A673 (cell line): ENCODE measurements at regions of chr10 and their contacts with region 1.

Region 1: GRCh38 chr10:119315128-119316001 is 108.0 kb downstream of the GRK5 start:
- DNase-seq: peak; percentile 80
- H3K4me3 ChIP-seq: no peak overlapping the region
- H3K27ac ChIP-seq: peak overlapping the region; percentile 85
- H3K4me1 ChIP-seq: peaks cover 55% of the 10 kb centered on the region
- H3K27me3 ChIP-seq: no peaks in the 10 kb centered on the region
- CTCF ChIP-seq: no peak

Region 2: GRCh38 chr10:119333146-119333792 is 17.9 kb after region 1 on chr10:
- CTCF ChIA-PET with region 1: no interaction called
- POLR2A ChIA-PET with region 1: interaction called, 21 read pairs
- intact Hi-C with region 1: no loop called
- DNase-seq: peak; percentile 40
- H3K4me3 ChIP-seq: no peak overlapping the region
- H3K27ac ChIP-seq: peak overlapping the region; percentile 63
- H3K4me1 ChIP-seq: peaks cover 38% of the 10 kb centered on the region
- H3K27me3 ChIP-seq: no peaks in the 10 kb centered on the region
- CTCF ChIP-seq: no peak